Activated naive CD8-positive, alpha-beta T cell treated with anti-CD3 and anti-CD28 coated beads, Interleukin-2, amount 10 ng/mL, durations not matched to agents 7 days and 5 days (primary cell): ENCODE measurements at regions of chr18 and their contacts with region 1.

Region 1: GRCh38 chr18:32018331-32019250 is at the start of gene RNF125:
- DNase-seq: peak; percentile 93
- ATAC-seq: peak; percentile 81
- H3K4me3 Mint-ChIP-seq: peak within 1 kb of the TSS; percentile 86
- H3K27ac Mint-ChIP-seq: peak within 1 kb of the TSS; percentile 100
- H3K4me1 Mint-ChIP-seq: peaks cover 28% of the 10 kb centered on the region
- H3K27me3 Mint-ChIP-seq: no peaks in the 10 kb centered on the region
- total RNA-seq, gene RNF125: 29.0 to 31.2 TPM

Region 2: DNA sequence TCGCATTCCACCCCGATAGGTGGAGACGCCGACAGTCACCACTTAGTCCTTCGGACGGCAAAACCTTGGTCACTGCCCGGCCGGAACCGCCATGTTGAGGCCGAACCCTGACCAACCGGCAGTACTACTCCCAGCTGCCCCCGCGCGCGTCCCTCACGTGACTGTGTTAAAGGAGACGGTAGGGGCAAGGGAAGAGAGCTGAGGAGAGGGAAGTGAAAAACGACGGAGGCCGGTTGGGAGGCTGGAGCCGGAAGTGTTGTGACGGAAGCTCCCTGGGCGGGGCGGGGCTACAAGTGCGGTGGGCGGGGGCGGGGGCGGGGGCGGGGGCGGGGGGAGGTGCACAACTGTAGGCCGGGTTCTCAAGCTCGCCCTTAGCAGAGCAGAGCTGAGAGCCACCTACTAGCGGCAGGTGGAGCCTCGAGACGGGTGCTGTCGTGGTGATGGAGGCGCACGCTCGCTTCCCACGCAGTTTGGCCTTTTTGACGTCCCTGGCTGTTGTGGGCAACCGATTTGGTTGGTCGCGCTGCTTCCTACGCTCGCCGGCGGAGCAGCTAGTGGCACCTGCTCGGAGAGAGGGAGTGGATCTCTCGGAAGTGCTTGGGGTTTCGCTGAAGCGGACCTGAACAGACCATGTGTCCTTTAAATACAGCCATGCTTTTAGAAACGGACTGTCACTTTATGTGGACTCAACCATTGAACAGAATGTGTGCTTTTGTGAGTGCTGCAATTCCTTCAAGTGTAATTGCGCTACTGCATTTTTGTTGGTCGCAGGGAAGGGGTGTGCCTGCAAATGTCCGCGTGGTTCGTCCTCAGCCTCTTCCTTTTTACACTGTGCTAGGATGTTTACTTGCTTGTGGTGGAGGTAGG is 75.4 kb before region 1 on chr18 and contains the start of gene TRAPPC8:
- POLR2A ChIA-PET with region 1: interaction called, 68 read pairs
- DNase-seq: peak; percentile 88
- ATAC-seq: peak; percentile 93
- H3K4me3 Mint-ChIP-seq: peak within 1 kb of the TSS; percentile 99
- H3K27ac Mint-ChIP-seq: peak within 1 kb of the TSS; percentile 99
- H3K4me1 Mint-ChIP-seq: peaks cover 33% of the 10 kb centered on the region
- H3K27me3 Mint-ChIP-seq: no peaks in the 10 kb centered on the region
- total RNA-seq, gene TRAPPC8: 39.6 to 46.1 TPM

Region 3: DNA sequence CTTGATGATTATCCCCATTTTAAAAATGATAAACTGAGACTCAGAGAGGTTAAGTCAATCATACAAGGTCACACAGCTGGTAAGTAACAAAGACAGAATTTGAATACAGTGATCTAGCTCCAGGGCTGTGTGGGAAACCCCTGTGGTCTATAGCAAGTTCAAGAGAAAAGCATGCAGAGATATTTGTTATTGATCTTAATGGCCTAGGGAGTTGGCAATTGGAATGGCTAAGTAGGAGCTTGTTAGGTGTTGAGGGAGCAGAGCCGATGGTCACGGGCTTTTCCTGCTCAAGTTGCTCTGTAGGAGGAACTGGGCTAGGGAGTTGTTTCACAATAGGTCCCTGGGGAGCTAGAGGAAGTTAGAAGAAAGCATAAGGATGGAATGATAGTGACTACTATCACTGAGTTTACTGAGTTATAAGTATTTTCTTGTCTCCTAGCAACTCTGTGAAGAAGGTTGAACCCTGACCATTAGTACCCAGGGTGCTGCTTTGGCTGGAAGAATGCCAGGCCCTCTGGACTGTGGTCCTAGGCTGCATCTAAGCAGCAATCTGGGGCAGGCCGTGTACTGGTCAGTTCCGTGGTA is 30.0 kb after region 1 on chr18:
- POLR2A ChIA-PET with region 1: interaction called, 68 read pairs
- DNase-seq: no peak
- ATAC-seq: peak; percentile 46
- H3K4me3 Mint-ChIP-seq: peak overlapping the region; percentile 65
- H3K27ac Mint-ChIP-seq: peak overlapping the region; percentile 96
- H3K4me1 Mint-ChIP-seq: peaks cover 33% of the 10 kb centered on the region
- H3K27me3 Mint-ChIP-seq: no peaks in the 10 kb centered on the region

Region 4: GRCh38 chr18:32072321-32072720 is 53.7 kb after region 1 on chr18:
- POLR2A ChIA-PET with region 1: interaction called, 35 read pairs
- DNase-seq: no peak
- ATAC-seq: peak; percentile 58
- H3K4me3 Mint-ChIP-seq: no peak overlapping the region
- H3K27ac Mint-ChIP-seq: no peak overlapping the region
- H3K4me1 Mint-ChIP-seq: peaks cover 15% of the 10 kb centered on the region
- H3K27me3 Mint-ChIP-seq: no peaks in the 10 kb centered on the region

Region 5: DNA sequence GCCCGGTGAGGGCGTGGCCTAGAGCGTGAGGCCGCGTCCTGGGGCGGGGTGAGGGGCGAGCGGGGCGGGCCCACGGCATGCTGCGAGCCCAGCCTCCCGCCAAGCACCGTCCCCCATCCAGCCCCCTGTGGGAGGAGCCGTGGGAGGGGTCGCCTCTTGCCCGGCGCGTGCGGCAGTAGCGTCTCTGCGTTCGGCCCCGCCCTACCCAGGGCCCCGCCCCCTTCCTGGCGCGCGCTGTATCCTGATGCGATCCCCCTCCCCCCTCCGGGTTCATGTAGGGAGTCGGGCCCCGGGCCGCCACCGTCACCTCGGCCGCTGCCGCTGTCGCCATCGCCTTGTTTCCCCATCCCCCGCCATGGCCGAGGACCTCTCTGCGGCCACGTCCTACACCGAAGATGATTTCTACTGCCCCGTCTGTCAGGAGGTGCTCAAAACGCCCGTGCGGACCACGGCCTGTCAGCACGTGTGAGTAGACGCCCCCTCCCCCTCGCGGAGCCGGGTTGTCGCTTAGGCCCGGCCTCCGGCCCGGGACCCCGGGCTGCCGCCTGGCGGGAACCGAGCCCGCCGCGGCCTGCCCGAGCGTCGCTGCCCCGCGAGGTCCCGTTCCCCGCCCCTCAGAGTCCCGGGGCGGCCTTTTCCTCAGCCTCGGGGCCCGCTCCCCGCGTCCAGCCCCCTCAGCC is 74.0 kb after region 1 on chr18:
- POLR2A ChIA-PET with region 1: interaction called, 114 read pairs
- DNase-seq: peak; percentile 99
- ATAC-seq: peak; percentile 84
- H3K4me3 Mint-ChIP-seq: peak overlapping the region; percentile 100
- H3K27ac Mint-ChIP-seq: peak overlapping the region; percentile 96
- H3K4me1 Mint-ChIP-seq: peaks cover 41% of the 10 kb centered on the region
- H3K27me3 Mint-ChIP-seq: no peaks in the 10 kb centered on the region